ENCODE measurements at regions of chr15 and their contacts with region 1.

Region 1: GRCh38 chr15:77821188-77821958 is 188.7 kb upstream of the LINGO1 start:
- DNase-seq: peak in 4 of 5 donors; percentile 76 to 85 (median 82)
- H3K4me3 ChIP-seq: no peak overlapping the region
- H3K27ac ChIP-seq: no peak overlapping the region
- H3K4me1 ChIP-seq: no peaks in the 10 kb centered on the region
- H3K27me3 ChIP-seq: peaks cover 14% of the 10 kb centered on the region
- CTCF ChIP-seq: peak; percentile 58

Region 2: DNA sequence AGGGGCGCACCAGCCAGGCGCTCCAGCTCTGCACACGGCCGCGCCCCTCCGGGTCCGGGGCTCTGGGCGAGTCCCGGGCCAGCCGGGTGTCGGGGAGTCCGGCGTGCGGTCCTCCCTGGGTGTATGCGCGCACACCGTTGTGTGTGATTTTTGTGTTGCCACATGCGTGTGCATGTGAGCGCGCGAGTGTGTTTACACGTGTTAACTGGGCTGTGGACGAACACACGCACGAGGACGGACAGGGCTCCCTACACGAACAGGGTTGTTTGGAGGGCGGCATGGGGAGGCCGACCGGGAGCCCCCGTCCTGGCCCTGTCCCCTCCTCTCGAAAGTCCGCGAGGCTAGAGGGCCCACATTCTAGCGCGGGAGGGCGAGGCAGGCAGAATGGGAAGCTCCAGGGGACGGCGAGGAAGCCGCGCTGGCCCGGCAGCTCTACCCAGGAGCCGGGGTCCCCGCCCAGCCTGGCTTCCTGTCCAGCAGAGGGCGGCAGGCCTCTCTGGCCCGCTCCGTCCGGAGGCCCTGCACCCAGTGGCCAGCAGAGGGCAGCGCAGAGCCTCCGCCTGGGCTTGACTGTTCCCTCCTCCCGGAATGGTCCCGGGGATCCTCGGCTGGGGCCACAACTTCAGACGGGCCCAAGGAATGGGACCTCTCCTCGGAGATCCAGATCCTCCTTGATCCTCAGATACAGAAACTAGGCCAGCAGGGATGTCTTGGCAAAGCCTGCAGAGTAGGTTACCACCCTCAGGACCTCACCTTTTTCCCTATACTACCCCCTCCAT is 188.1 kb before region 1 on chr15:
- intact Hi-C with region 1: loop called (anchors 10 kb)
- DNase-seq: peak; percentile 91 to 94 (median 93)
- H3K4me3 ChIP-seq: peak overlapping the region in 2 of 3 donors; percentile 43 to 44
- H3K27ac ChIP-seq: no peak overlapping the region
- H3K4me1 ChIP-seq: peaks cover 0 to 9% (median 8%) of the 10 kb centered on the region in 3 donors
- H3K27me3 ChIP-seq: peaks cover 7% of the 10 kb centered on the region
- CTCF ChIP-seq: peak; percentile 100

Region 3: GRCh38 chr15:78093242-78094020 is 272.1 kb after region 1 on chr15:
- intact Hi-C with region 1: no loop called
- DNase-seq: peak in 3 of 5 donors; percentile 39 to 92 (median 67)
- H3K4me3 ChIP-seq: no peak overlapping the region
- H3K27ac ChIP-seq: no peak overlapping the region
- H3K4me1 ChIP-seq: peaks cover 0 to 10% (median 0%) of the 10 kb centered on the region in 3 donors
- H3K27me3 ChIP-seq: no peaks in the 10 kb centered on the region
- CTCF ChIP-seq: no peak